IMR-90 (cell line): ENCODE measurements at regions of chr4 and their contacts with region 1.

Region 1: DNA sequence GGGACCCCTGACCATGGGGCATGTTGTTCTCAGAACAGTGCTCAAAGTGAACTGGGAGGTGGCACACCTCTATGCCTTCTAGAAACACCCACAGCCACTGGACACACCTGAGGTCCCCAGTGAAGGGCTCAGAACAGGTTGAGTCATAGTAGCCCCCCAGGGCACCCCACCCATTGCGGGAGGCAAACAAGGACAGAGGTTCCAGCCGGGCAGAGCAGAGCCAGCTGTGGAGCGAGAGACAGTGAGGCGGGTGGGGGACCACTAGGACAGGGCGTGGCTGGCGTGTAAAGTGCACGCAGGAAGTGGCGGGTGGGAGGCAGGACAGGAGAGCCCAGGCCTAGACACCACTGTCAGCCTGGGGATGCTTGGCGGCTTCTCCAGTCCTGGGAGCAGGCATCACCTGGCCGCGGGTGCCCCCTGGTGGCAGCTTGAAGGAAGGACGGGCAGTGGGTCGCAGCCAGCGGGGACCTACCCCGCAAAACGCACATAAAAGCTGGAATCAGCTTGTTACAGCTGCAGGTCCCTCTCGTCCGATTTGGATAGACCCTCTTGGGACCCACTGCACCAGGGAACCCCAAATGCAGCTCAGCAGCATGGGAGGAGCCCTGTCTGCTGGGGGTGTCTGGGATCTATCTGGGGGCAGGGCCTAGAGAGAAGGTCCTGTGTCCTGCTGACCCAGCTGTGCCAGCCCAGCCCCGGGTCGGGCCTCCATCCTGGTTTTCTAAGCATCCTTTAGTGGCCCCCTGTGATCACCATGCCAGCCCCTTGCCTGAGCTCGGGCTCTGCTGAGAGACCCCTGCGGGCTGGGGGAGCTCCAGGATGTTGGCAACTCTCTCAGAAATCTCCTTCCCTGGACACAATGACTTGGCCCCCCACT is 57.6 kb downstream of the WFS1 start:
- DNase-seq: peak; percentile 55
- ATAC-seq: peak; percentile 96
- H3K4me3 ChIP-seq: no peak overlapping the region
- H3K27ac ChIP-seq: no peak overlapping the region
- H3K4me1 ChIP-seq: no peaks in the 10 kb centered on the region
- H3K27me3 ChIP-seq: peaks cover 25% of the 10 kb centered on the region
- CTCF ChIP-seq: peak; percentile 96
- POLR2A ChIP-seq: no peak
- RAD21 ChIP-seq: peak; percentile 98

Region 2: GRCh38 chr4:5998333-5998936 is 328.8 kb before region 1 on chr4:
- CTCF ChIA-PET with region 1: no interaction called
- POLR2A ChIA-PET with region 1: no interaction called
- dilution Hi-C with region 1: no loop called
- in situ Hi-C with region 1: loop called (anchors 10 kb)
- intact Hi-C with region 1: loop called (anchors 1 kb)
- DNase-seq: peak; percentile 61
- ATAC-seq: peak; percentile 98
- H3K4me3 ChIP-seq: no peak overlapping the region
- H3K27ac ChIP-seq: no peak overlapping the region
- H3K4me1 ChIP-seq: no peaks in the 10 kb centered on the region
- H3K27me3 ChIP-seq: no peaks in the 10 kb centered on the region; the same call in 1 of the 2 replicates
- CTCF ChIP-seq: peak; percentile 81
- POLR2A ChIP-seq: no peak
- RAD21 ChIP-seq: peak; percentile 63

Region 3: DNA sequence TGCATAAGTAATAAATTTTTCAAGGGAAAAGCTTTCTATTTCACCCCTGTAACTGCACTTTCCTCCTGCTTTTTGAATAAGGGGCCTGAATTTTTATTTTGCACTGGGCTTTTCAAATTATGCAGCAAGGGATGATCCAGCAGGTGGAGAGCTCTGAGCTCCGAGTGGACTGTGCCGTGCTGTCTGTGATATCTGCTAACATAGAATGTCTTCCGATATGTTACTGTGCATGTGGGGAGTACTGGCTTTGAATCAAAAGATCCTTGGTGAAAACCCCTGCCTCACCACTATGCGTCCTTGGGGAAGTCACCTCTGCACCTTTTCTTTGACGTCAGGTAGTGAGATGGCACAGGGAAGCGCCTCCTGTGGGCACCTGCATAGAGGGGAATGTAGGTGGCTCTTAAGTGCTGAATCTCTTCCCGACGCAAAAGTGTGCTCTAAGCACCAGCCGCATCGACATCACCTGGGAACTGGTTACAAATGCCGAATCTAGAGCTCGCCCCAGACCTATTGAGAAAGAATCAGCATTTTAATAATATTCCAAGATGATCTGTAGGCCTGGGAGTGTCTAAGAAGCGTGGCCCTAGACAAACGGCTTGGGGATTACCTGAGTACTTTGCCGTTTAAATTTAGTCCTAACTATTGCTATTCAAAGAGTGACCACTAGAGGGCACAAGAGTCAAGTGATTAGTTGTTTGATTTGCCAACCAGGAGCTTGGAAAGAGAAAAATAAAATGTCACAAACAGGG is 76.9 kb before region 1 on chr4:
- CTCF ChIA-PET with region 1: interaction called, 43 read pairs
- POLR2A ChIA-PET with region 1: no interaction called
- dilution Hi-C with region 1: no loop called
- in situ Hi-C with region 1: loop called (anchors 5 kb)
- intact Hi-C with region 1: loop called (anchors 1 kb)
- DNase-seq: peak; percentile 59
- ATAC-seq: peak; percentile 83
- H3K4me3 ChIP-seq: no peak overlapping the region
- H3K27ac ChIP-seq: no peak overlapping the region
- H3K4me1 ChIP-seq: no peaks in the 10 kb centered on the region
- H3K27me3 ChIP-seq: peaks cover 38% of the 10 kb centered on the region
- CTCF ChIP-seq: peak; percentile 85
- POLR2A ChIP-seq: 0 out of 2 replicates have a peak, but pooled peaks have one; percentile 32
- RAD21 ChIP-seq: peak; percentile 88

Region 4: GRCh38 chr4:6264225-6264540 is 63.1 kb before region 1 on chr4:
- CTCF ChIA-PET with region 1: interaction called, 34 read pairs
- POLR2A ChIA-PET with region 1: no interaction called
- dilution Hi-C with region 1: no loop called
- in situ Hi-C with region 1: no loop called
- intact Hi-C with region 1: loop called (anchors 1 kb)
- DNase-seq: peak; percentile 63
- ATAC-seq: peak; percentile 94
- H3K4me3 ChIP-seq: no peak overlapping the region
- H3K27ac ChIP-seq: no peak overlapping the region
- H3K4me1 ChIP-seq: no peaks in the 10 kb centered on the region
- H3K27me3 ChIP-seq: peaks cover 6% of the 10 kb centered on the region; the same call in 1 of the 2 replicates
- CTCF ChIP-seq: peak; percentile 80
- POLR2A ChIP-seq: no peak
- RAD21 ChIP-seq: peak; percentile 87

Region 5: DNA sequence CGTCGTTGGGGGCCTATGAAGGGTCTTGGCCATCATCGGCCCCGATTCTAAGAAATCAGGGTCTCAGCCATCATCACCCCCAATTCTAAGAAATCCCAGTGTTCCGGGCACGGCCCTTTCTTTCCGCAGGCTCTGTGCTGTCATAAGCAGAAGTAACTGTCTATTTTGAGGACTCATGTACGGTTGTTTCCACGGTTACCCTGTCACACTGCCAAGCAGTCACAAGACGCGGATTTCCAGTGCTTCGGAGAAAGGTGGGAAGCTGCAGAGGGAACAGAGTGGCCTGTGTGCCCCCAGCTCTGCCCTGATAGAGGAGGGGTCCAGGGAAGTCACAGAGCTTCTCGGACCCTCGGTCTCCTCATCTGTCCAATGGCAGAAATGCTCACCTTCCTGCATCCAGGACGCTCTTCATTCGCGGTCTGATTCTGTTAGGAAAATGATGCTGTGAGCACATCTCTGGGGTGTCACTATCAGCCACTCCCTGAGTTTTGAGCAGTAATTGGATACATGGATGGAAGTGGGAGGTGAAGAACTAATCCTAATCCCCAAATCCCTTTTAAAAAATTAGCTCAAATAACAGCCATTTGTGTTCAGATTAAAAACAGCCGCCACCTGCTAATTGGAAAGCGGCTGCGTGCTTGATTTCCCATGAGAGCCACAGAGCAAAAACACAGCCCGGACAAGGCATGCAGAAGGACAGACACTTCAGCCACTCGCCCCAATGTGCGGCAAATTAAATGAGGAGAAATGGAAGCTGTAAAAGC is 15.4 kb after region 1 on chr4:
- CTCF ChIA-PET with region 1: interaction called, 11 read pairs
- POLR2A ChIA-PET with region 1: no interaction called
- dilution Hi-C with region 1: no loop called
- in situ Hi-C with region 1: no loop called
- intact Hi-C with region 1: no loop called
- DNase-seq: peak; percentile 27
- ATAC-seq: no peak
- H3K4me3 ChIP-seq: no peak overlapping the region
- H3K27ac ChIP-seq: no peak overlapping the region
- H3K4me1 ChIP-seq: peaks cover 2% of the 10 kb centered on the region; the same call in 1 of the 2 replicates
- H3K27me3 ChIP-seq: peaks cover 12% of the 10 kb centered on the region
- CTCF ChIP-seq: no peak
- POLR2A ChIP-seq: no peak
- RAD21 ChIP-seq: no peak

Region 6: GRCh38 chr4:6546681-6547447 is 219.6 kb after region 1 on chr4:
- CTCF ChIA-PET with region 1: no interaction called
- POLR2A ChIA-PET with region 1: no interaction called
- dilution Hi-C with region 1: no loop called
- in situ Hi-C with region 1: no loop called
- intact Hi-C with region 1: loop called (anchors 1 kb)
- DNase-seq: peak; percentile 72
- ATAC-seq: peak; percentile 93
- H3K4me3 ChIP-seq: no peak overlapping the region
- H3K27ac ChIP-seq: no peak overlapping the region
- H3K4me1 ChIP-seq: no peaks in the 10 kb centered on the region
- H3K27me3 ChIP-seq: peaks cover 3% of the 10 kb centered on the region; the same call in 1 of the 2 replicates
- CTCF ChIP-seq: peak; percentile 86
- POLR2A ChIP-seq: no peak
- RAD21 ChIP-seq: peak; percentile 55

Region 7: GRCh38 chr4:7081891-7082471 is 754.7 kb after region 1 on chr4:
- CTCF ChIA-PET with region 1: no interaction called
- POLR2A ChIA-PET with region 1: no interaction called
- dilution Hi-C with region 1: no loop called
- in situ Hi-C with region 1: no loop called
- intact Hi-C with region 1: loop called (anchors 5 kb)
- DNase-seq: peak; percentile 28
- ATAC-seq: peak; percentile 61
- H3K4me3 ChIP-seq: no peak overlapping the region
- H3K27ac ChIP-seq: no peak overlapping the region
- H3K4me1 ChIP-seq: no peaks in the 10 kb centered on the region
- H3K27me3 ChIP-seq: peaks cover 30% of the 10 kb centered on the region
- CTCF ChIP-seq: peak; percentile 41
- POLR2A ChIP-seq: no peak
- RAD21 ChIP-seq: peak; percentile 49